ENCODE measurements at regions of chr12 and their contacts with region 1.

Region 1: DNA sequence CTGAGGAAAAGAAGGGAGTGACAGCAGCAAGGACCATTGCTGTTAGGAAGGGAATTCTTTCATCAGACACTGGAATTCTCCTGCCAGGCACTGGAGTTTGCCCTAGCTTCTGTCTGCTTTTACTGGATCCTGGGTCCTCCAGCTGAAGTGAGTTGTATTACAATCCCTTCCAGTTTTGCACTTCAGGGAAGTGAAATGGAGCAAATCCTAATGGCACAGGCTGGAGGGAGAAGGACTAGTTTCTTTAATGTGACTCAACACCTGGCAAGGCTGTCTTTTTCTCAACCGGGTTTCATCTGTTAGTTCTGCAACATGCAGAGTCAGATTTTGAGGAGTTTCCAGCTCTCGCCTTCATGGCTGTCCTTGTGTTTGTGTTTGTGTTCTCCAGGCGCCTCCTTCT is 45.8 kb downstream of the ETV6 start:
- DNase-seq: peak in 1 of 2 donors; percentile 48
- H3K4me3 ChIP-seq: no peak overlapping the region
- CTCF ChIP-seq: no peak
- POLR2A ChIP-seq: no peak

Region 2: DNA sequence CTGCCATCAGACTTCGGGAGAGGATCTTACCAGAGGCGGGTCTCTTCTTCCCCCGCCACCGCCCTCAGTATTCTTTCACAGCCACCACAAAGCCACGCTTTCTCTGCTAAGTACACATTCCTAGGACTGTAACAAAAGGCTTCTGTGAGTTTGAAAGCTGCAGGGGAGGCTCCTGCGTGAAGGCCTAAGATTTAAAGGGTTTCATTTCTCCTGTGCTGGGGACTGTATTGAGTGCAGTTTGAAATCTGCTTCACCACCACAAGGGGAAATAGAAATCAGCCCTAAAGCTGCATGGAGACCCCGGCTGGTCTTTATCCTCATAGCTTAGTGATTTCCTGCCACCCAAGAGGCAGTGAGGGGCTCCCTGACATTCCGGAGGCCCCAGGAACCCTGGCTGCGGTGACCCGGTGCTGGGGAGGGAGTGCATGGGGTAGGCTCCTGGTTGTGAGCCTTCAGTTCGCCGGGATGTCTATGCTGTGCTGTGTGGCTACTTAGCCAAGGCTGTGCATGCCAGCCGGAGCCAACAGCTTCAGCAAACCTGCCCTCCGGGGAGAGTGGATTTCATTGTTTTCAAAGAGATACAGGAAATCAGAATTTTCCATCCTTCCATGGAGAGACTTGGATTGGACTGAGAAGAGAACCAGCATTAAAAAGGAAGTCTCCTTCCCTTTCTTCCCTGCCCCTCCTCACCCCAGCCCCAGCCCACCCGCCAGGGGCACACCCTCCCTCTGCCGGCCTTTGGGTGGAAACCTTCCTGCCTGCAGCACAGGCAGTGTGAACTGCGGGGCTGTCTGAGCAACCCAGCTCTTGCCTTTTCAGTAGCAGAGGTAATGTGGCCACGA is 117.5 kb after region 1 on chr12:
- intact Hi-C with region 1: loop called (anchors 10 kb)
- DNase-seq: peak in 1 of 2 donors; percentile 90
- H3K4me3 ChIP-seq: no peak overlapping the region
- CTCF ChIP-seq: no peak
- POLR2A ChIP-seq: no peak

Measured in lower leg skin (tissue), 4 donors.